Activated CD4-positive, alpha-beta T cell treated with anti-CD3 and anti-CD28 coated beads, Interleukin-2, amount 10 ng/mL, durations not matched to agents 24 days and 14 days (primary cell): ENCODE measurements at regions of chr1 and their contacts with region 1.

Region 1: GRCh38 chr1:44721485-44722361 is 9.2 kb downstream of the RNU5D-1 start:
- DNase-seq: peak; percentile 94
- H3K4me3 Mint-ChIP-seq: peak overlapping the region; percentile 75
- H3K27ac Mint-ChIP-seq: peak overlapping the region; percentile 97
- H3K4me1 Mint-ChIP-seq: peaks cover 69% of the 10 kb centered on the region
- H3K27me3 Mint-ChIP-seq: no peaks in the 10 kb centered on the region

Region 2: GRCh38 chr1:45543581-45544417 is 822.1 kb after region 1 on chr1:
- intact Hi-C with region 1: loop called (anchors 1 kb)
- DNase-seq: peak; percentile 91
- H3K4me3 Mint-ChIP-seq: peak overlapping the region; percentile 76
- H3K27ac Mint-ChIP-seq: peak overlapping the region; percentile 87
- H3K4me1 Mint-ChIP-seq: peaks cover 31% of the 10 kb centered on the region
- H3K27me3 Mint-ChIP-seq: no peaks in the 10 kb centered on the region